ENCODE measurements at regions of chr6 and their contacts with region 1.

Region 1: GRCh38 chr6:33248925-33249731 is 22.5 kb downstream of the VPS52 start:
- DNase-seq: peak; percentile 98
- H3K4me3 ChIP-seq: peak overlapping the region in 2 of 3 donors; percentile 47 to 48
- H3K27ac ChIP-seq: peak overlapping the region; percentile 89 to 96 (median 95)
- H3K4me1 ChIP-seq: peaks cover 10 to 16% of the 10 kb centered on the region in 2 donors
- H3K27me3 ChIP-seq: no peaks in the 10 kb centered on the region
- CTCF ChIP-seq: peak in 2 of 6 experiments; percentile 3 to 9
- POLR2A ChIP-seq: peak; percentile 24 to 81

Region 2: DNA sequence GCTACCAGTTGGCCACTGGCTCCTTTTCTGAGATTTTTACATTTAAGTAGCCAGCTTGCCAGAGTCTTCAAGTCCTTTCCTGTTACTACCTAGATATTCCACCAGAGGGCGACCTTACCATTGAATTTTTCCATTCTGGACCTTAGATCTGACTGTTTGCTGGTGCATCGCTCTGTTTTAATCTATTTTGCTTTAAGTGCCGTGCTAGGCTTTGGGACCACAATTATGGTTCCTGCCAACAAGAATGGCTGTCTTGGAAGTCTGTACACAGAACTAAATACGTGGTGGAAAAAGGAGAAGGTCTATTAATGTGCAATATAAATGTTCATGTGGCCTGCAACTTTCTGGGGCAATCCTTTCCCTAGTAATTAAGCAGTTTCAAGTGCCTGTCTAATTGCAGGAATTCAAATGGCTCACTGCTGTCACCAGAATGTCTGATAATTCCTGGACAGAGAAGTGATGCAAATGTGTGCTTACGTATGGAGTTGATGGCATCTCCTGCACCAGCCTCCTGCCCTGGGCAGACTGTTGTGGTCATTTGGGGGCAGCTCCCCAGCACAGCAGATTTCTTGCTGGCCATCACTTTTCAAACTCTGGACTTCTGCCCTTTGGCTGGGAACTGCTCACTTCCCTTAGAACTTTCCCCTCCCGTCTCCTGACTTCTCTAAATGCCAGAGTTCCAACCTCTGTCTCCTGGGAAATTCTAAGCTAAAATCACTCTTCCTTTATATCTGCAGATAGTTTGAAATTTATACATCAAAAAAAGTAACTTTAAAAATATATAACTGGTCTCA is 234.1 kb before region 1 on chr6:
- intact Hi-C with region 1: loop called (anchors 10 kb)
- DNase-seq: peak; percentile 9 to 25
- H3K4me3 ChIP-seq: no peak overlapping the region
- H3K27ac ChIP-seq: no peak overlapping the region
- H3K4me1 ChIP-seq: peaks cover 5 to 17% of the 10 kb centered on the region in 2 donors
- H3K27me3 ChIP-seq: peaks cover 3% of the 10 kb centered on the region
- CTCF ChIP-seq: peak; percentile 48 to 83 (median 76)
- POLR2A ChIP-seq: no peak

Region 3: GRCh38 chr6:33123732-33124524 is 125.2 kb before region 1 on chr6:
- intact Hi-C with region 1: loop called (anchors 5 kb)
- DNase-seq: no peak
- H3K4me3 ChIP-seq: no peak overlapping the region
- H3K27ac ChIP-seq: no peak overlapping the region
- H3K4me1 ChIP-seq: no peaks in the 10 kb centered on the region
- H3K27me3 ChIP-seq: no peaks in the 10 kb centered on the region
- CTCF ChIP-seq: peak in 3 of 6 experiments; percentile 6 to 39 (median 32)
- POLR2A ChIP-seq: no peak

Region 4: GRCh38 chr6:33161354-33162331 is 87.5 kb before region 1 on chr6:
- intact Hi-C with region 1: loop called (anchors 5 kb)
- DNase-seq: peak; percentile 81 to 84
- H3K4me3 ChIP-seq: peak overlapping the region in 1 of 3 donors; percentile 32
- H3K27ac ChIP-seq: peak overlapping the region in 2 of 3 donors; percentile 44 to 50
- H3K4me1 ChIP-seq: peaks cover 0 to 17% of the 10 kb centered on the region in 2 donors
- H3K27me3 ChIP-seq: no peaks in the 10 kb centered on the region
- CTCF ChIP-seq: peak; percentile 70 to 96 (median 92)
- POLR2A ChIP-seq: no peak

Region 5: GRCh38 chr6:33200219-33201146 is 48.6 kb before region 1 on chr6 and contains the starts of genes RXRB and SLC39A7:
- intact Hi-C with region 1: loop called (anchors 2 kb)
- DNase-seq: peak; percentile 100
- H3K4me3 ChIP-seq: peak within 1 kb of the TSS; percentile 63 to 84 (median 79)
- H3K27ac ChIP-seq: peak within 1 kb of the TSS; percentile 64 to 96 (median 96)
- H3K4me1 ChIP-seq: peaks cover 38 to 58% of the 10 kb centered on the region in 2 donors
- H3K27me3 ChIP-seq: no peaks in the 10 kb centered on the region
- CTCF ChIP-seq: no peak
- POLR2A ChIP-seq: peak in 1 of 2 donors; percentile 70
- total RNA-seq, gene RXRB: 29.6 to 46.8 (median 41.2) TPM
- total RNA-seq, gene SLC39A7: 90.8 to 191 (median 153) TPM

Measured in thyroid gland (tissue), 4 donors.